MCF 10A (cell line): ENCODE measurements at regions of chr17 and their contacts with region 1.

Region 1: DNA sequence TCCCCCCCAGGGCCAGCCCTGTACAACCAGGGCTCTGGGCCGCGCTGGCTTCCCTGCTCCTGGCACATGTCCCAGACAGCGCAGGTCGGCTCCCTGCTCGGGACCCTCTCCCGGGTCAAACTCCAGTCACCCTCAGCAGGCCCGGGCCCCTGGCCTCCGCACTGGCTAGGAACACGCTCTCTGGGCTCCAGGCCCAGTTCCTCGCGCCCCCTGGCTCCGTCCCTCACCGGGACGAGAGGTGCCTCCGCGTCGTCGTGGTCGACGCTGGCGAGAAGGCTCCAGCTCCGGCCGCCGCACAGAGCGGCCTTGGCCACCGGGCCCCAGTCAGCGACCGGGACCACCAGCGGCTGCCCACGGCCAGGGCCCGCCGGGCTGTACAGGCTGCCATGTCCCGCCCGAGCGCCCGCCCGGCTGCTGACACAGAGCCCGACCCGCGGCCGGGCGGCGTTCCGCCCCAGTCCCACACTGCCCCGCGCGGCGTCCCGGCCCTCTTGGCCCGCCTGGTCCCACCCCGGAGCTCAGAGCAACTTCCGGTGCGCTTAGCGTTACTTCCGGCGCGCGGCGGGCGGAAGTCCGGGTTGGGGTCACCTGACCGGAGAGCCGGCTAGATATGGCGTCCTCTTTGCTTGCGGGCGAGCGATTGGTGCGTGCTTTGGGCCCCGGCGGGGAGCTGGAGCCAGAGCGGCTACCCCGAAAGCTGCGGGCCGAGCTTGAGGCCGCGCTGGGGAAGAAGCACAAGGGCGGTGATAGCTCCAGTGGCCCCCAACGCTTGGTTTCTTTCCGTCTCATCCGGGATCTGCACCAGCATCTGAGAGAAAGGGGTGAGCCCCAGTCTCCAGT is at the start of gene POLDIP2:
- DNase-seq: peak; percentile 92
- H3K4me3 Mint-ChIP-seq: peak within 1 kb of the TSS; percentile 88
- H3K27ac Mint-ChIP-seq: peak within 1 kb of the TSS; percentile 84
- H3K4me1 Mint-ChIP-seq: peaks cover 13% of the 10 kb centered on the region
- H3K27me3 Mint-ChIP-seq: no peaks in the 10 kb centered on the region
- CTCF ChIP-seq: no peak
- total RNA-seq, gene POLDIP2: 84.0 and 105 TPM in 2 replicates

Region 2: GRCh38 chr17:28346746-28347246 is 10.5 kb before region 1 on chr17:
- CTCF ChIA-PET with region 1: interaction called, 23 read pairs
- POLR2A ChIA-PET with region 1: interaction called, 79 read pairs
- intact Hi-C with region 1: no loop called
- DNase-seq: no peak
- H3K4me3 Mint-ChIP-seq: no peak overlapping the region
- H3K27ac Mint-ChIP-seq: peak overlapping the region; percentile 59
- H3K4me1 Mint-ChIP-seq: peaks cover 12% of the 10 kb centered on the region
- H3K27me3 Mint-ChIP-seq: no peaks in the 10 kb centered on the region
- CTCF ChIP-seq: no peak

Region 3: GRCh38 chr17:28371245-28372202 is 14.2 kb after region 1 on chr17 and contains the start of gene SARM1:
- CTCF ChIA-PET with region 1: interaction called, 6 read pairs
- POLR2A ChIA-PET with region 1: interaction called, 22 read pairs
- intact Hi-C with region 1: no loop called
- DNase-seq: peak; percentile 27
- H3K4me3 Mint-ChIP-seq: peak within 1 kb of the TSS; percentile 70
- H3K27ac Mint-ChIP-seq: peak within 1 kb of the TSS; percentile 70
- H3K4me1 Mint-ChIP-seq: peaks cover 5% of the 10 kb centered on the region
- H3K27me3 Mint-ChIP-seq: no peaks in the 10 kb centered on the region
- CTCF ChIP-seq: no peak
- total RNA-seq, gene SARM1: 0.63 and 1.0 TPM in 2 replicates

Region 4: GRCh38 chr17:28384281-28385036 is 27.2 kb after region 1 on chr17:
- CTCF ChIA-PET with region 1: no interaction called
- POLR2A ChIA-PET with region 1: interaction called, 40 read pairs
- intact Hi-C with region 1: no loop called
- DNase-seq: no peak
- H3K4me3 Mint-ChIP-seq: no peak overlapping the region
- H3K27ac Mint-ChIP-seq: no peak overlapping the region
- H3K4me1 Mint-ChIP-seq: peaks cover 13% of the 10 kb centered on the region
- H3K27me3 Mint-ChIP-seq: no peaks in the 10 kb centered on the region
- CTCF ChIP-seq: no peak

Region 5: GRCh38 chr17:28405632-28406472 is 48.6 kb after region 1 on chr17 and contains the start of gene SLC46A1:
- CTCF ChIA-PET with region 1: interaction called, 3 read pairs
- POLR2A ChIA-PET with region 1: interaction called, 57 read pairs
- intact Hi-C with region 1: no loop called
- DNase-seq: peak; percentile 44
- H3K4me3 Mint-ChIP-seq: peak within 1 kb of the TSS; percentile 86
- H3K27ac Mint-ChIP-seq: no peak within 1 kb of the TSS
- H3K4me1 Mint-ChIP-seq: peaks cover 23% of the 10 kb centered on the region
- H3K27me3 Mint-ChIP-seq: no peaks in the 10 kb centered on the region
- CTCF ChIP-seq: no peak
- total RNA-seq, gene SLC46A1: 18.4 and 20.1 TPM in 2 replicates

Region 6: GRCh38 chr17:28416703-28417311 is 59.5 kb after region 1 on chr17:
- CTCF ChIA-PET with region 1: interaction called, 4 read pairs
- POLR2A ChIA-PET with region 1: interaction called, 8 read pairs
- intact Hi-C with region 1: loop called (anchors 1 kb)
- DNase-seq: peak; percentile 76
- H3K4me3 Mint-ChIP-seq: no peak overlapping the region
- H3K27ac Mint-ChIP-seq: no peak overlapping the region
- H3K4me1 Mint-ChIP-seq: peaks cover 7% of the 10 kb centered on the region
- H3K27me3 Mint-ChIP-seq: no peaks in the 10 kb centered on the region
- CTCF ChIP-seq: peak; percentile 78

Region 7: GRCh38 chr17:28433721-28434120 is 76.4 kb after region 1 on chr17:
- CTCF ChIA-PET with region 1: no interaction called
- POLR2A ChIA-PET with region 1: interaction called, 13 read pairs
- intact Hi-C with region 1: no loop called
- DNase-seq: no peak
- H3K4me3 Mint-ChIP-seq: no peak overlapping the region
- H3K27ac Mint-ChIP-seq: no peak overlapping the region
- H3K4me1 Mint-ChIP-seq: peaks cover 10% of the 10 kb centered on the region
- H3K27me3 Mint-ChIP-seq: no peaks in the 10 kb centered on the region
- CTCF ChIP-seq: no peak